ENCODE measurements at regions of chr20 and their contacts with region 1.

Region 1: DNA sequence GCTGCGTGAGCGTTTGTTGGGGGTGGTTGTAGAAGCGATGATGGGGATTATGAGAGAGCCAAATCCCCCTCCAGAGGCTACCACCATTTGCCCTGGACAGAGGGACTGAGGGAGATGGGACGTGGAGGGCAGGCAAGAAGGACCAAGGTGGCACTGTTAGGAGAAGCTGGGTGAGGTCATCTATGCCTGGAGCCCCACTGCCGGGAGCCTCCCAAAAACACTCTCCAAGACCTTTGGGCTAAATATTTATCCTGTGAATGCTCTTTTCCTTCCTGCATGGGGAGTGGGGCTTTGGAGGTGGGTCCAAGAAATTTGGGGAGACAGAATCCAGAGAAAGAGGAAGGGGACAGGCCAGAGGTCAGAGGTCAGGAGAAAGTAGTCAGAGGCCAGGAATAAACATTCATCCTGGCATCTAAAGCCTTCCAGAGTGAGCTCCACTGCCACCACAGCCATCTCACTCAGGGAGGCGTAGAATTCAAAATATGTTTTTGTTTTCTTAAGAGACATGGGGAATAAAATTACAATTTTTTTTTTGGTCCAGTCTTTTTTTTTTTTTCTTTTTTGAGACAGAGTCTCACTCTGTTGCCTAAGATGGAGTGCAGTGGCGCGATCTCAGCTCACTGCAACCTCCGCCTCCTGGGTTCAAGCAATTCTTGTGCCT is 17.8 kb upstream of the PTGIS start:
- DNase-seq: no peak
- ATAC-seq: no peak
- H3K4me3 ChIP-seq: no peak overlapping the region
- H3K27ac ChIP-seq: no peak overlapping the region
- H3K4me1 ChIP-seq: peaks cover 24% of the 10 kb centered on the region
- H3K27me3 ChIP-seq: no peaks in the 10 kb centered on the region
- CTCF ChIP-seq: no peak

Region 2: DNA sequence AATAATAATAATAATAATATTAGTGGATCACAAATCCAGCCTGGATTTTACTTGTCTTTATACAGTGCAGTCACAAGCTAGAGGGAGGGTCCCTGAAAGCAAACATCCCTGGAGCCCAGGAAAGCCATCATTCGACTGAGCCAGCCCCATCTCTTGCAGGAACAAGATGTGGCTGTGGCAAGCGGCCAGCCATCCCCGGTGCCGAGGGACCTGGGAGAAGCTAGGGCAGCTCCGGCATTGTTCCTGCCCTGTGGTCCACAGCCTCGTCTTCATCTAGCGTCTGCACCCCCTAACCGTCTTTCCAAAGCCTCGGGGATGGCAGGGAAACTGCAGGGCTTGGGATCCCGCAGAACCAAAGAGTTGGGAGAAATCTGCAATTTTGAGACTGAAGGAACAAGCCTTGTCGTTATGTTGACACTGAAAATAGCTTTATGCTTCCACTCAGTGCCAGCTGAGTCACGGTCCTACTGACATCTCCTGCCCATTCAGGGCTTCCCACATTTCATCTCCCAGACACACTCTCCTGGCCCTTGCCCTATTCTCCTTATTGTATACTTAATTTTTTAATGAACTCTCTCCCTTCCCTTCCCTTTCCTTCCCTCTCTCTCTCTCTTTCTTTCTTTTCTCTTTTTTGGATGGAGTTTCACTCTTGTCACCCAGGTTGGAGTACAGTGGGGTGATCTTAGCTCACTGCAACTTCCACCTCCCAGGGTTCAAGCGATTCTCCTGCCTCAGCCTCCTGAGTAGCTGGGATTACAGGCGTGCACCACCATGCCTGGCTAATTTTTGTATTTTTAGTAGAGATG is 245.4 kb before region 1 on chr20:
- CTCF ChIA-PET with region 1: no interaction called
- POLR2A ChIA-PET with region 1: no interaction called
- intact Hi-C with region 1: no loop called
- DNase-seq: peak; percentile 47
- ATAC-seq: peak; percentile 53
- H3K4me3 ChIP-seq: no peak overlapping the region
- H3K27ac ChIP-seq: no peak overlapping the region
- H3K4me1 ChIP-seq: peaks cover 19% of the 10 kb centered on the region
- H3K27me3 ChIP-seq: no peaks in the 10 kb centered on the region
- CTCF ChIP-seq: no peak

Region 3: DNA sequence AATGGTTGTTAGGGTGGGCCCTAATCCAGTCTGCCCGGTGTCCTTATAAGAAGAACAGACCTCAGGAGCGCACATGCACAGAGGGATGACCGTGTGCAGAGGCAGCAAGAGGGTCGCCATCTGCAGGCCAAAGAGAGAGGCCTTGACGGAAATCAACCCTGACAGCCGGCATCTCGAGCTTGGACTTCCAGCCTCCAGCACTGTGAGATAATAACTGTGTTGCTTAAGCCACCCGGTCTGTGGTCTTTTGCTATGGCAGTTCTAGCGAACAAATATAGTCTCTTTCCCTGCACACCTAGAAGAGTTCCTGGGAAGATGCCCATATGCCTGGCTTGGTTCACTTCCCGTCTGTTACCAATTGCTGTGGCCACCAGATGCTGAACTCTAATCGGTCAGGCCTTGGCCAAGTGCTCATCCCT is 17.5 kb after region 1 on chr20:
- CTCF ChIA-PET with region 1: no interaction called
- POLR2A ChIA-PET with region 1: interaction called, 5 read pairs
- intact Hi-C with region 1: loop called (anchors 1 kb)
- DNase-seq: peak; percentile 43
- ATAC-seq: no peak
- H3K4me3 ChIP-seq: no peak overlapping the region
- H3K27ac ChIP-seq: no peak overlapping the region
- H3K4me1 ChIP-seq: peaks cover 18% of the 10 kb centered on the region
- H3K27me3 ChIP-seq: no peaks in the 10 kb centered on the region
- CTCF ChIP-seq: peak; percentile 68

Region 4: GRCh38 chr20:49661560-49662329 is 76.0 kb after region 1 on chr20:
- CTCF ChIA-PET with region 1: no interaction called
- POLR2A ChIA-PET with region 1: no interaction called
- intact Hi-C with region 1: no loop called
- DNase-seq: no peak
- ATAC-seq: no peak
- H3K4me3 ChIP-seq: no peak overlapping the region
- H3K27ac ChIP-seq: no peak overlapping the region
- H3K4me1 ChIP-seq: peaks cover 13% of the 10 kb centered on the region
- H3K27me3 ChIP-seq: no peaks in the 10 kb centered on the region
- CTCF ChIP-seq: no peak

Measured in PC-3 (cell line).